Activated naive CD4-positive, alpha-beta T cell treated with anti-CD3 and anti-CD28 coated beads for 36 hours (primary cell): ENCODE measurements at regions of chr4 and their contacts with region 1.

Region 1: DNA sequence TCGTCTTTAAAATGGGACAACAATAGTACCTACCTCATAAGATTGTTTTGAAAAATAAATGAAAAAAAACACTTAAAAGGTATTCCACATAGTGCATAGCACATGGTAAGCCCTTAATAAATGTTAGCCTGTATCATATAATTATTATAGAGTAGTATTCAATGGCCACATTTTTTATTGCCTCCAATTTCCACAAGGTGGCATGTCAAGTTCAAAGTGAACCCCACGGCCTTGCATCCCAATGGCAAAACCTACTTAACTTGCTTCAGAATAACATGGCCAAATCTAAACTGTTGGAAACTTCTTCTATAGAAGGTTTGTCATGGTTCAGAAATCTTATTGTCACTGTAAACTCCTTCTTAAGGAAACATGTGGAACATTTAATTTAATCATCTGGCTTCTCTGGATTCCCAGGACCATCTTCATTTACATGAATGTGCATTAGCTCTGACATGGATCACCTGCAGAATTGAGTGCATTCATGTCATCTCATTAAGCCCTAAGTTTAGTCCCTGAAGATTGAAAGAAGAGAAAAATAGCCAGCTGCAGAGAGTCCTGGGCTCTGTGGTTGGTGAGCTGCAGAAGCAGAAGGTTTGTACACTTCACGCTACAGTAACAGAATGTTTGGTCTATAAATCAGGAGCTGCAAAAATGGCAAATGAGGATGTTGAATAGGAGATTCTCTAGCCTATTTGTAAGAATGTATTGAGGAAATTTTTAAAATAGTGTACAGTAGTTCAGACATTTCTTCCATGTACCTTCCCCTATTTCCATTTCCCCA is 61.0 kb downstream of the ANXA3 start:
- DNase-seq: peak; percentile 42
- H3K4me3 Mint-ChIP-seq: no peak overlapping the region
- H3K27ac Mint-ChIP-seq: no peak overlapping the region
- H3K4me1 Mint-ChIP-seq: peaks cover 39% of the 10 kb centered on the region
- H3K27me3 Mint-ChIP-seq: no peaks in the 10 kb centered on the region

Region 2: GRCh38 chr4:78542373-78542772 is 70.2 kb before region 1 on chr4:
- CTCF ChIA-PET with region 1: no interaction called
- intact Hi-C with region 1: no loop called
- DNase-seq: no peak
- H3K4me3 Mint-ChIP-seq: no peak overlapping the region
- H3K27ac Mint-ChIP-seq: no peak overlapping the region
- H3K4me1 Mint-ChIP-seq: peaks cover 12% of the 10 kb centered on the region
- H3K27me3 Mint-ChIP-seq: peaks cover 26% of the 10 kb centered on the region

Region 3: GRCh38 chr4:78923464-78924312 is 311.1 kb after region 1 on chr4:
- CTCF ChIA-PET with region 1: no interaction called
- intact Hi-C with region 1: loop called (anchors 5 kb)
- DNase-seq: no peak
- H3K4me3 Mint-ChIP-seq: no peak overlapping the region
- H3K27ac Mint-ChIP-seq: no peak overlapping the region
- H3K4me1 Mint-ChIP-seq: no peaks in the 10 kb centered on the region
- H3K27me3 Mint-ChIP-seq: no peaks in the 10 kb centered on the region

Region 4: GRCh38 chr4:80081581-80081980 is 1469.0 kb after region 1 on chr4:
- CTCF ChIA-PET with region 1: no interaction called
- intact Hi-C with region 1: no loop called
- DNase-seq: no peak
- H3K4me3 Mint-ChIP-seq: no peak overlapping the region
- H3K27ac Mint-ChIP-seq: no peak overlapping the region
- H3K4me1 Mint-ChIP-seq: peaks cover 25% of the 10 kb centered on the region
- H3K27me3 Mint-ChIP-seq: peaks cover 2% of the 10 kb centered on the region